Activated CD4-positive, alpha-beta memory T cell treated with anti-CD3 and anti-CD28 coated beads for 36 hours (primary cell): ENCODE measurements at regions of chr11 and their contacts with region 1.

Region 1: DNA sequence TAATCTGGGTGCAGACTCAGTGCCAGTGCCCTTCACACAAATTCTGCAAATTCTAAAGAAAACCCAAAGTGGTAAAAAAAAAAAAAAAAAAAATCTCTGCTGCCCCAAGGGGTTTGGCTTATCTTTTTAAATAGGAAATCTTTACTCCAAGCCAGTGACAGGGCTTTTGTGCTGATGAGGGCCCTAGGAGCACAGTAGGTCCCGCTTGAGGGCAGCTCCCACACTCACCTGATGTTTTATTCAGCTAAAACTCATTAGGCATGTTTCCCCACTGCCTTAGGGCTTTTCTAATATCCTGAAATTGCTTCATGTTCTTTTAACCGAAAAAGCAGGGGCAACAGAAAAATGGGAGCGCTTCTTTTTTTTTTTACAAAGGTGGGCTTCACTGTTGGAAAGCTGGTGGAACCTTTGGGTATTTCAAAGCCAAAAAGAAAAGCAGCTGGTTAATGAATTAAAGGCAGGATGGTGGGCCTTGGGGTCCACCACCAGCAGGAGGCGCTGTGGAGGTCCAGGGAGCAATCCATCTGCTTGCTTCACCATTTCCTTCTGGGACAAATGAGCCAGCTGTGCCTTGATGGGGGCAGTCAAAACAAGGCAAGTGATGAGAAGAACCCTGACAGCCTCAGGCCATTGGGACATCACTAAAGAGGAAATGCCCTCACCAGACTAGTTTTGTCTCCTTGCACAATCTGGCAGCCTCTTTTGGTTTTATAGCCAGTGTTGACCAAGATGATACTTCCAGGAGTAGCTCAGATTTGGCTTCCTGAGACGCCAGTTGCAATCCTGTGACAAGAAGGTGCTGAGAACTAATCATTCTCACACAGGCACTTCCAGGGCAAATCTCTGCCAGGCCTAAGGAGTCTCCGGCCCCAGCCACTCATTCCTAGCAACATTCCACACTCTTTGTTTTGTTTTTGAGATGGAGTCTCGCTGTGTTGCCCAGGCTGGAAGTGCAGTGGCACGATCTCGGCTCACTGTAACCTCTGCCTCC is 38.4 kb upstream of the WEE1 start:
- DNase-seq: peak; percentile 87
- H3K4me3 Mint-ChIP-seq: no peak overlapping the region
- H3K27ac Mint-ChIP-seq: no peak overlapping the region
- H3K4me1 Mint-ChIP-seq: no peaks in the 10 kb centered on the region
- H3K27me3 Mint-ChIP-seq: no peaks in the 10 kb centered on the region

Region 2: GRCh38 chr11:9384535-9385303 is 150.4 kb before region 1 on chr11 and contains the start of gene IPO7:
- CTCF ChIA-PET with region 1: no interaction called
- POLR2A ChIA-PET with region 1: no interaction called
- intact Hi-C with region 1: no loop called
- DNase-seq: peak; percentile 93
- H3K4me3 Mint-ChIP-seq: peak within 1 kb of the TSS; percentile 96
- H3K27ac Mint-ChIP-seq: peak within 1 kb of the TSS; percentile 87
- H3K4me1 Mint-ChIP-seq: peaks cover 29% of the 10 kb centered on the region
- H3K27me3 Mint-ChIP-seq: no peaks in the 10 kb centered on the region
- total RNA-seq, gene IPO7: 161 to 172 TPM

Region 3: DNA sequence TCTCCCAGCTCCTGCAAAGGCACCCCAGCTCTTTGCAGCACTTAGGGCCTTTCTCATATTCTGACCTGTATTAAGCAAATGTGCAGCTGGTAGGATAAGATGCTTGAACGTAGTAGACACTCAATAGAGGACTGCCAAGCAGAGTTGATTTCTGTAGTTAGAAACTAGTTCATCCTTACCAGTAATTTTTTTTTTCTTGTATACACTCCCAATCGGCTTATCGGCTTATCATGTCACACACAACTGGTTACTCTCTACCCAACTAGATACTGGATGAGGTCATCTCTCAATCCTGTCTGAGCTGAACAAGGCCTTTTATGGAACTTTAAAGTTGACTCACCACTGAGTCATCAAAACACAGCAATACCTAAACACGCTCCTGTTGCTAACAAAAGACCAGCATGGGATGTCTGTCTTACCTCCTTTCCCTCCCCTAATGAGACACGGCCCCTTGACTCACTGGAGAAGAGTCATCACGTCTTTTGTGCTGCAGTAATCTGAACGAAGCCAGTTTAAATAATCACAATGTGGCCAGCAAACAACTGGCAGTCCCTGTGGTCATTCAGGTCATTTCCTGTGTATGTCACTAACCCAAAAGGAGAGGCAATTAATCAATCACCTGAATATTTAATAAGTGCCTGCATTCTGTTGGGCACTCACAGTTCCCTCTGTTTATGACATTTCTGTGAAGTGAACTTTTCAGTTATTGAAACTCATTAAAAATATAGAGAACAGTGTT is 30.9 kb after region 1 on chr11:
- CTCF ChIA-PET with region 1: interaction called, 41 read pairs
- POLR2A ChIA-PET with region 1: no interaction called
- intact Hi-C with region 1: loop called (anchors 1 kb)
- DNase-seq: peak; percentile 80
- H3K4me3 Mint-ChIP-seq: peak overlapping the region; percentile 36
- H3K27ac Mint-ChIP-seq: peak overlapping the region; percentile 82
- H3K4me1 Mint-ChIP-seq: peaks cover 37% of the 10 kb centered on the region
- H3K27me3 Mint-ChIP-seq: no peaks in the 10 kb centered on the region

Region 4: GRCh38 chr11:9601037-9601875 is 66.2 kb after region 1 on chr11:
- CTCF ChIA-PET with region 1: interaction called, 23 read pairs
- POLR2A ChIA-PET with region 1: interaction called, 4 read pairs
- intact Hi-C with region 1: no loop called
- DNase-seq: peak; percentile 87
- H3K4me3 Mint-ChIP-seq: peak overlapping the region; percentile 68
- H3K27ac Mint-ChIP-seq: peak overlapping the region; percentile 84
- H3K4me1 Mint-ChIP-seq: peaks cover 24% of the 10 kb centered on the region
- H3K27me3 Mint-ChIP-seq: no peaks in the 10 kb centered on the region

Region 5: GRCh38 chr11:9701799-9702198 is 166.7 kb after region 1 on chr11:
- CTCF ChIA-PET with region 1: no interaction called
- POLR2A ChIA-PET with region 1: no interaction called
- intact Hi-C with region 1: no loop called
- DNase-seq: no peak
- H3K4me3 Mint-ChIP-seq: no peak overlapping the region
- H3K27ac Mint-ChIP-seq: peak overlapping the region; percentile 14
- H3K4me1 Mint-ChIP-seq: peaks cover 20% of the 10 kb centered on the region
- H3K27me3 Mint-ChIP-seq: no peaks in the 10 kb centered on the region

Region 6: GRCh38 chr11:9748361-9748970 is 213.4 kb after region 1 on chr11:
- CTCF ChIA-PET with region 1: interaction called, 133 read pairs
- POLR2A ChIA-PET with region 1: interaction called, 6 read pairs
- intact Hi-C with region 1: loop called (anchors 2 kb)
- DNase-seq: peak; percentile 79
- H3K4me3 Mint-ChIP-seq: no peak overlapping the region
- H3K27ac Mint-ChIP-seq: no peak overlapping the region
- H3K4me1 Mint-ChIP-seq: peaks cover 11% of the 10 kb centered on the region
- H3K27me3 Mint-ChIP-seq: no peaks in the 10 kb centered on the region